HepG2 (cell line): ENCODE measurements at regions of chr2 and their contacts with region 1.

Region 1: GRCh38 chr2:179751163-179751809 is 110.1 kb downstream of the ZNF385B start:
- DNase-seq: peak; percentile 27
- ATAC-seq: peak; percentile 52; the same call in 1 of the 3 replicates
- H3K4me3 ChIP-seq: no peak overlapping the region
- H3K27ac ChIP-seq: no peak overlapping the region
- H3K4me1 ChIP-seq: no peaks in the 10 kb centered on the region
- H3K27me3 ChIP-seq: no peaks in the 10 kb centered on the region
- CTCF ChIP-seq: peak; percentile 80
- EP300 ChIP-seq: no peak
- POLR2A ChIP-seq: no peak
- RAD21 ChIP-seq: peak; percentile 87

Region 2: GRCh38 chr2:179218848-179219594 is 532.3 kb before region 1 on chr2:
- CTCF ChIA-PET with region 1: no interaction called
- POLR2A ChIA-PET with region 1: no interaction called
- in situ Hi-C with region 1: no loop called
- intact Hi-C with region 1: loop called (anchors 1 kb)
- DNase-seq: peak; percentile 73
- ATAC-seq: peak; percentile 94
- H3K4me3 ChIP-seq: no peak overlapping the region
- H3K27ac ChIP-seq: no peak overlapping the region
- H3K4me1 ChIP-seq: no peaks in the 10 kb centered on the region; the same call in 1 of the 2 replicates
- H3K27me3 ChIP-seq: no peaks in the 10 kb centered on the region
- CTCF ChIP-seq: peak; percentile 92
- EP300 ChIP-seq: no peak
- POLR2A ChIP-seq: no peak
- RAD21 ChIP-seq: peak; percentile 86

Region 3: GRCh38 chr2:179410552-179411356 is 340.5 kb before region 1 on chr2:
- CTCF ChIA-PET with region 1: interaction called, 42 read pairs
- POLR2A ChIA-PET with region 1: no interaction called
- in situ Hi-C with region 1: no loop called
- intact Hi-C with region 1: loop called (anchors 1 kb)
- DNase-seq: peak; percentile 77
- ATAC-seq: peak; percentile 96
- H3K4me3 ChIP-seq: peak overlapping the region in 1 of 3 experiments; percentile 13; a peak in 1 of 6 replicates
- H3K27ac ChIP-seq: no peak overlapping the region
- H3K4me1 ChIP-seq: peaks cover 9% of the 10 kb centered on the region; the same call in 1 of the 2 replicates
- H3K27me3 ChIP-seq: no peaks in the 10 kb centered on the region
- CTCF ChIP-seq: peak; percentile 87
- EP300 ChIP-seq: no peak
- POLR2A ChIP-seq: no peak
- RAD21 ChIP-seq: peak; percentile 74

Region 4: DNA sequence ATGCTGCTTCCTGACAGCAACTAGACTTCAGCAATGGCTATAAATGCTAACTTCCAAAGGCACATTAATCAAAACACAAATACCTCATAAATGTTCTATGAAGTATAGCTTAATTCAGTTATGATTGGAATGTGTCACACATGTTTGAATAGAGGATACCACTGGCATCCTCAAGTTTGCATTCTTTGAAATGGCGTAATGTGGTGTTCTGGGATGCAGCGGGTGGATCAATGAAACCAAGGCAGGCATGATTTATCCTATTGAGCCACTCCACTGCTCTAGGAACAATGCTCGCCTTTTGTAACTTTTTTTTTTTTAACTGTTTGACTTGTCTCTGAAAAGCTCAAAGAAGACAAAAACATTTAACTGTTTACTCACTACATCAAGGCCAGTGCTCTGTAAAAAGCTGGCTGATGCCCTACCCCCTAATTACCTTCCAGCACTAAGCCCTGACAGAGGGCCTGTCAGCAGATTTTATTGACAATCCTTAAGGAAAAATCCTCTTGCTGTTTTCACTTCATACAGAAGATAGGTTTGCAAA is 207.9 kb before region 1 on chr2:
- CTCF ChIA-PET with region 1: no interaction called
- POLR2A ChIA-PET with region 1: no interaction called
- in situ Hi-C with region 1: no loop called
- intact Hi-C with region 1: loop called (anchors 1 kb)
- DNase-seq: peak; percentile 100
- ATAC-seq: peak; percentile 99
- H3K4me3 ChIP-seq: peak overlapping the region in 1 of 3 experiments; percentile 12; a peak in 1 of 6 replicates
- H3K27ac ChIP-seq: peak overlapping the region; percentile 88
- H3K4me1 ChIP-seq: peaks cover 54% of the 10 kb centered on the region
- H3K27me3 ChIP-seq: no peaks in the 10 kb centered on the region
- CTCF ChIP-seq: no peak
- EP300 ChIP-seq: peak; percentile 94 to 100; a peak in 3 of 4 replicates
- POLR2A ChIP-seq: no peak
- RAD21 ChIP-seq: peak; percentile 36

Region 5: GRCh38 chr2:179595284-179595683 is 156.0 kb before region 1 on chr2:
- CTCF ChIA-PET with region 1: no interaction called
- POLR2A ChIA-PET with region 1: no interaction called
- in situ Hi-C with region 1: no loop called
- intact Hi-C with region 1: loop called (anchors 2 kb)
- DNase-seq: peak; percentile 33
- ATAC-seq: peak; percentile 98
- H3K4me3 ChIP-seq: no peak overlapping the region
- H3K27ac ChIP-seq: no peak overlapping the region
- H3K4me1 ChIP-seq: no peaks in the 10 kb centered on the region
- H3K27me3 ChIP-seq: no peaks in the 10 kb centered on the region
- CTCF ChIP-seq: peak; percentile 51
- EP300 ChIP-seq: no peak
- POLR2A ChIP-seq: no peak
- RAD21 ChIP-seq: peak; percentile 53; the same call in 1 of the 2 replicates